ENCODE measurements at regions of chr1 and their contacts with region 1.

Region 1: GRCh38 chr1:33036526-33037503 is at the start of gene AK2:
- DNase-seq: peak; percentile 96
- H3K4me3 Mint-ChIP-seq: peak within 1 kb of the TSS; percentile 83
- H3K27ac Mint-ChIP-seq: peak within 1 kb of the TSS; percentile 88
- H3K4me1 Mint-ChIP-seq: peaks cover 40% of the 10 kb centered on the region
- H3K27me3 Mint-ChIP-seq: no peaks in the 10 kb centered on the region
- total RNA-seq, gene AK2: 325 to 328 TPM

Region 2: GRCh38 chr1:32939655-32940371 is 97.0 kb before region 1 on chr1:
- CTCF ChIA-PET with region 1: interaction called, 3 read pairs
- POLR2A ChIA-PET with region 1: no interaction called
- intact Hi-C with region 1: loop called (anchors 5 kb)
- DNase-seq: peak; percentile 65
- H3K4me3 Mint-ChIP-seq: no peak overlapping the region
- H3K27ac Mint-ChIP-seq: peak overlapping the region; percentile 72
- H3K4me1 Mint-ChIP-seq: peaks cover 43% of the 10 kb centered on the region
- H3K27me3 Mint-ChIP-seq: no peaks in the 10 kb centered on the region

Region 3: GRCh38 chr1:33080885-33081553 is 44.2 kb after region 1 on chr1 and contains the start of gene AZIN2:
- CTCF ChIA-PET with region 1: no interaction called
- POLR2A ChIA-PET with region 1: no interaction called
- intact Hi-C with region 1: loop called (anchors 5 kb)
- DNase-seq: peak; percentile 98
- H3K4me3 Mint-ChIP-seq: peak within 1 kb of the TSS; percentile 62
- H3K27ac Mint-ChIP-seq: no peak within 1 kb of the TSS
- H3K4me1 Mint-ChIP-seq: peaks cover 6% of the 10 kb centered on the region
- H3K27me3 Mint-ChIP-seq: no peaks in the 10 kb centered on the region
- total RNA-seq, gene AZIN2: 2.5 to 2.9 TPM

Region 4: GRCh38 chr1:33094971-33095604 is 58.3 kb after region 1 on chr1:
- CTCF ChIA-PET with region 1: no interaction called
- POLR2A ChIA-PET with region 1: no interaction called
- intact Hi-C with region 1: loop called (anchors 5 kb)
- DNase-seq: peak; percentile 28
- H3K4me3 Mint-ChIP-seq: no peak overlapping the region
- H3K27ac Mint-ChIP-seq: no peak overlapping the region
- H3K4me1 Mint-ChIP-seq: peaks cover 28% of the 10 kb centered on the region
- H3K27me3 Mint-ChIP-seq: no peaks in the 10 kb centered on the region

Measured in activated CD4-positive, alpha-beta memory T cell treated with anti-CD3 and anti-CD28 coated beads for 36 hours (primary cell).